ENCODE measurements at regions of chr2 and their contacts with region 1.

Region 1: GRCh38 chr2:37664231-37664643 is 7.2 kb downstream of the CDC42EP3 start:
- DNase-seq: no peak

Region 2: GRCh38 chr2:37414470-37414949 is 249.7 kb before region 1 on chr2:
- intact Hi-C with region 1: loop called in 1 of 2 experiments (anchors 10 kb)
- DNase-seq: no peak

Region 3: GRCh38 chr2:37506407-37507050 is 157.7 kb before region 1 on chr2:
- intact Hi-C with region 1: no loop called
- DNase-seq: no peak

Region 4: GRCh38 chr2:37585982-37586621 is 78.1 kb before region 1 on chr2:
- intact Hi-C with region 1: loop called in 1 of 2 experiments (anchors 10 kb)
- DNase-seq: peak; percentile 88